ENCODE measurements at regions of chr11 and their contacts with region 1.

Region 1: GRCh38 chr11:123020968-123021367 is 39.3 kb upstream of the BSX start:
- DNase-seq: no peak
- H3K4me3 ChIP-seq: no peak overlapping the region
- H3K27ac ChIP-seq: no peak overlapping the region
- H3K4me1 ChIP-seq: peaks cover 0 to 8% (median 5%) of the 10 kb centered on the region in 3 donors
- H3K27me3 ChIP-seq: peaks cover 0 to 46% (median 2%) of the 10 kb centered on the region in 4 donors
- CTCF ChIP-seq: peak in 3 of 6 experiments; percentile 12 to 47 (median 25)
- POLR2A ChIP-seq: no peak

Region 2: GRCh38 chr11:122863704-122864326 is 157.2 kb before region 1 on chr11:
- intact Hi-C with region 1: loop called (anchors 5 kb)
- DNase-seq: no peak
- H3K4me3 ChIP-seq: no peak overlapping the region
- H3K27ac ChIP-seq: no peak overlapping the region
- H3K4me1 ChIP-seq: peaks cover 0 to 9% (median 0%) of the 10 kb centered on the region in 3 donors
- H3K27me3 ChIP-seq: peaks cover 0 to 36% (median 0%) of the 10 kb centered on the region in 4 donors
- CTCF ChIP-seq: peak; percentile 56 to 81 (median 78)
- POLR2A ChIP-seq: no peak

Region 3: GRCh38 chr11:123188508-123189165 is 167.7 kb after region 1 on chr11:
- intact Hi-C with region 1: no loop called
- DNase-seq: no peak
- H3K4me3 ChIP-seq: peak overlapping the region in 1 of 4 donors; percentile 29
- H3K27ac ChIP-seq: peak overlapping the region in 3 of 4 donors; percentile 32 to 66 (median 50)
- H3K4me1 ChIP-seq: peaks cover 0 to 34% (median under 1%) of the 10 kb centered on the region in 3 donors
- H3K27me3 ChIP-seq: peaks cover 0 to 91% (median 0%) of the 10 kb centered on the region in 4 donors
- CTCF ChIP-seq: peak in 1 of 6 experiments; percentile 18
- POLR2A ChIP-seq: no peak

Measured in esophagus squamous epithelium (tissue), 5 donors.